ENCODE measurements at regions of chr2 and their contacts with region 1.

Region 1: DNA sequence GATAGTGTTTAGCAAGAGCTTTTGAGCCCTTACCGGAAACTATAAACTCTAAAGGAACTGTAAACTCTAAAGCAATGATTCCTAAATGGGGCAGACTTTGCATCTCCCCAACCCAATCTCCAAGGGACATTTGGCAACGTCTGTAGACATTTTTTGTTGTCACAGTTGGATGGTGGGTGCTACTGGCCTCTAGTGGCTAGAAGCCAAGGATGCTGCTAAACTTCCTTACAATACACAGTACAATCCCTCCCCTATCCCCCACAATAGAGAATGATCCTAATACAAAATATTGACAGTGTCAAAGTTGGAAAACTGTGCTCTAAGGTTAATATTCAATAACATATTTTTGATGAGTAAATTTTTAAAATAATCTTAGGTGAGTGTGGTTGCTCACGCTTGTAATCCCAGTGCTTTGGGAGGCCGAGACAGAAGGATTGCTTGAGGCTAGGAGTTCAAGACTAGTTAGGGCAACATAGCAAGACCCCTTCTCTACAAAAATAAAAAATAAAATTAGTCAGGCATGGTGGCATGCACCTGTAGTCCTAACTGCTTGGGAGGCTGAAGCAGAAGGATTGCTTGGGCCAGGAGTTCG is 66.7 kb downstream of the PTPN4 start:
- DNase-seq: no peak
- ATAC-seq: peak; percentile 79
- H3K4me3 ChIP-seq: no peak overlapping the region
- H3K27ac ChIP-seq: no peak overlapping the region
- H3K4me1 ChIP-seq: no peaks in the 10 kb centered on the region
- H3K27me3 ChIP-seq: no peaks in the 10 kb centered on the region
- CTCF ChIP-seq: peak; percentile 53

Region 2: GRCh38 chr2:119759451-119760236 is 66.8 kb before region 1 on chr2 and contains the start of gene PTPN4:
- intact Hi-C with region 1: loop called (anchors 10 kb)
- DNase-seq: peak; percentile 99
- ATAC-seq: peak; percentile 99
- H3K4me3 ChIP-seq: peak within 1 kb of the TSS; percentile 82
- H3K27ac ChIP-seq: peak within 1 kb of the TSS; percentile 89
- H3K4me1 ChIP-seq: peaks cover 14% of the 10 kb centered on the region
- H3K27me3 ChIP-seq: no peaks in the 10 kb centered on the region
- CTCF ChIP-seq: no peak
- total RNA-seq, gene PTPN4: 45.4 TPM

Measured in upper lobe of right lung (tissue), 1 donor.